H1 (cell line): ENCODE measurements at regions of chr7 and their contacts with region 1.

Region 1: DNA sequence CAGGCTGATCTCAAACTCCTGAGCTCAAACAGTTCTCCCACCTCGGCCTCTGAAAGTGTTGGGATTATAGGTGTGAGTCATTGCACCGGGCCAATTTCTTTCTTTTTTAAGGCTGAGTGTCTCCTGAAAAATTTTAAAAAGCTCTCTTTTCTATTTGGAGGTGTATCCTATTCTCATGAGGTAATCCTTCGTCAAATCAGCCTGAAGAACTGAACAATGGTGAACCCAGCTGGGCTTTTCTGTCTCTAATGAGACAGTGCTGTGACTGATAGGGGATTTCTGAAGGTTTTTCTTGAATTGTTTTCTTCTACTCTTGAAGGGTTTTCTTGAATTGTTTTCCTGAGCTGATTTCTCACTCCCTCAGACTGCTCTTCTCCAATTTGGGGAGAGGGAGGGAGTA is 30.9 kb upstream of the CALU start:
- DNase-seq: no peak
- H3K4me3 ChIP-seq: peak overlapping the region in 2 of 4 experiments; percentile 5 to 42; a peak in 2 of 8 replicates
- H3K27ac ChIP-seq: peak overlapping the region; percentile 30; the same call in 1 of the 2 replicates
- H3K4me1 ChIP-seq: peaks cover 2 to 10% (median 6%) of the 10 kb centered on the region in 4 experiments; a peak in 4 of 7 replicates
- H3K27me3 ChIP-seq: no peaks in the 10 kb centered on the region
- CTCF ChIP-seq: no peak
- EP300 ChIP-seq: no peak
- POLR2A ChIP-seq: no peak
- RAD21 ChIP-seq: no peak

Region 2: GRCh38 chr7:128681794-128682537 is 26.3 kb before region 1 on chr7:
- CTCF ChIA-PET with region 1: no interaction called
- POLR2A ChIA-PET with region 1: no interaction called
- DNase-seq: no peak
- H3K4me3 ChIP-seq: no peak overlapping the region
- H3K27ac ChIP-seq: no peak overlapping the region
- H3K4me1 ChIP-seq: no peaks in the 10 kb centered on the region
- H3K27me3 ChIP-seq: no peaks in the 10 kb centered on the region
- CTCF ChIP-seq: no peak
- EP300 ChIP-seq: no peak
- POLR2A ChIP-seq: no peak
- RAD21 ChIP-seq: no peak

Region 3: DNA sequence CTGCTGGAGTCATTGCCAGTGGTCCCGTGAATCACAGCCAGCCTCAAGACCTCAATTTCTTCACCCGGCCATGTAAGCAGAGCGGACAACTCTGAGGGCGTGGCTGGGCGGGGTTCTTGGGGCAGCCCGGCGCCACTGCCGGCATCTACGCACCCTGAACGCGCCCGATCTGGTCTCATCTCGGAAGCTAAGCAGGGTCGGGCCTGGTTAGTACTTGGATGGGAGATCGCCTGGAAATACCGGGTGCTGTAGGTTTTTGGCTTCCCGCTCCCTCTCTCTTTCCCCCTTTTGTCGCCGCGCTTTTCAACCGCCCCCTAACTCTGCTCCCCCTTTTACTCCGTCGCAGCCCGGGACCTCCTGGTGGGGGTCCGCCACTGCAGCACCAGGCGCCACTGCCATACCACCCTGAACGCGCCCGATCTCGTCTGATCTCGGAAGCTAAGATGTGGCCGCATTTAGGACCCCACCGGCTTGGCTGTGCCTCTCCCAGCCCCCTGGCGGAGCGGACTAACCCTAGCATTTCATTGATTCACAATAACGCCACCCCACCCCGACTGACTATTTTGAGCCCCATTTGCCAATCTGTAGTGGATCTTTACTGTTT is 10.8 kb before region 1 on chr7:
- CTCF ChIA-PET with region 1: interaction called, 10 read pairs
- POLR2A ChIA-PET with region 1: interaction called, 5 read pairs
- DNase-seq: peak in 1 of 2 experiments; percentile 97
- H3K4me3 ChIP-seq: peak overlapping the region; percentile 32 to 74 (median 56)
- H3K27ac ChIP-seq: no peak overlapping the region
- H3K4me1 ChIP-seq: peaks cover 3 to 16% (median 5%) of the 10 kb centered on the region in 4 experiments
- H3K27me3 ChIP-seq: no peaks in the 10 kb centered on the region; a peak in 2 of 7 replicates
- CTCF ChIP-seq: peak; percentile 58 to 65 (median 62)
- EP300 ChIP-seq: no peak
- POLR2A ChIP-seq: peak in 1 of 2 experiments; percentile 69; a peak in 2 of 3 replicates
- RAD21 ChIP-seq: peak; percentile 23 to 31